A673 (cell line): ENCODE measurements at regions of chr1 and their contacts with region 1.

Region 1: GRCh38 chr1:206012086-206012859 is 9.1 kb upstream of the RAB7B start:
- DNase-seq: peak; percentile 34
- H3K4me3 ChIP-seq: no peak overlapping the region
- H3K27ac ChIP-seq: no peak overlapping the region
- H3K4me1 ChIP-seq: no peaks in the 10 kb centered on the region
- H3K27me3 ChIP-seq: no peaks in the 10 kb centered on the region
- CTCF ChIP-seq: no peak

Region 2: DNA sequence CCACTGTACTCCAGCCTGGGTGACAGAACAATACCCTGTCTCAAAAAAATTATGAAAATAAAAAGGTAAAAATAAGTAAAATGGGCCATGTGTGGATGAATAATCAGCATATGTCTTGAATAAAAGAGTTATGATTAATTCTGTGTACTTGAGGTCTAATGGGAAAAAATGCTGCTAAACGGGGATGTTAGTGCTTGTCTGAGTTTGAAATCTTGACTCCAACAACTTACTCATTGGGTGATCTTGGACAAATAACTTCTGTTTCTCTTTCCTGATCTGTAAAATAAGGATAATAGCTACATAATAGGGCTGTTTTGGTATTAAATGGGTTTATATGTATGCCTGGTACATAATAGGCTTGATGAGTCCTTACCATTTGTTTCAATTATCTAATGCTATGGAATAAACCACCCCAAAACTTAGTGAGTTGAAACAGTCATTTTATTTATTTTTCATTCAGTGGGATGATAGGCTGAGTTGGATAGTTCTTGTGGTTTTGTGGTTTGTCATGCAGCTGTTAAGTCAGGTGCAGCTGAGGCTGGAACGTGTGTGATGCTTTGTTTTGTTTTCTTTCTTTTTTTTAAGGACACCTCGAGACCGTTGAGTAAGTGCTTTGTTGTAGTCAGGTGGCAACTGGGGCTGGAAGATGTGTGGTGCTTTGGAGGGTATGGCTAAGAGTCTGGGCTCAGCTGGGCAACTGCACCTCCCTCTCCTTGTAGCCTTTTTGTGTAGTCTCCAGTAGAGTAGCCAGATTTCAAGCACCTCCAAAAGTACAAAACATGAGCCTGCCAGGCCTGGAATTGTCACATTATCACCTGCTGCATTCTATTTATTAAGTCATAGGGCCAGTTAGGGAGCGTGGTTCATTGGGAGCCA is 1491.2 kb before region 1 on chr1:
- CTCF ChIA-PET with region 1: no interaction called
- POLR2A ChIA-PET with region 1: interaction called, 17 read pairs
- intact Hi-C with region 1: no loop called
- DNase-seq: no peak
- H3K4me3 ChIP-seq: no peak overlapping the region
- H3K27ac ChIP-seq: no peak overlapping the region
- H3K4me1 ChIP-seq: no peaks in the 10 kb centered on the region
- H3K27me3 ChIP-seq: no peaks in the 10 kb centered on the region
- CTCF ChIP-seq: no peak

Region 3: DNA sequence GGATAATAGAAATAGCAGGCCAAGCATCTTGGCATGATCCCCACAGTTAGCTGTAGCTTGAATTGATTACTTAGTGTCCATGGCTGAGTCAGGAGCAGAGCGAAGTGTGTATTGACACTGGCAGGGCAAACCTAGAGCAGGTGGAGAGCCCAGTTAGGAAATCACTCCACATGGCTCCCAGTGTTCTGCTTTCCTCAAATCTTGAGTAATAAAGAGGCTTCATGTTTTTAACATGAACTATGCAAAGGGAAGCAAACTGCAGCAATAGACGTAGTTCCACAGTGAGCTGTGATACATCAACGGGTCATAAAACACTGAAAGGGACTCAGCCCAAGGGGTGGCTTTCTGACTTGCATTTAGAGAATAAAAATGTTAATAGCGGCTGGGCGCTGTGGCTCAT is 69.6 kb after region 1 on chr1:
- CTCF ChIA-PET with region 1: no interaction called
- POLR2A ChIA-PET with region 1: no interaction called
- intact Hi-C with region 1: no loop called
- DNase-seq: no peak
- H3K4me3 ChIP-seq: no peak overlapping the region
- H3K27ac ChIP-seq: no peak overlapping the region
- H3K4me1 ChIP-seq: no peaks in the 10 kb centered on the region
- H3K27me3 ChIP-seq: no peaks in the 10 kb centered on the region
- CTCF ChIP-seq: no peak